ENCODE measurements at regions of chr7 and their contacts with region 1.

Region 1: GRCh38 chr7:98106647-98107445 is at the start of gene LMTK2:
- DNase-seq: peak; percentile 97
- ATAC-seq: peak; percentile 100
- H3K4me3 ChIP-seq: peak within 1 kb of the TSS; percentile 74 to 91 (median 84)
- H3K4me3 Mint-ChIP-seq: peak within 1 kb of the TSS; percentile 98
- H3K27ac ChIP-seq: peak within 1 kb of the TSS; percentile 47 to 77
- H3K27ac Mint-ChIP-seq: peak within 1 kb of the TSS; percentile 92
- H3K4me1 ChIP-seq: peaks cover 10 to 14% of the 10 kb centered on the region in 2 donors
- H3K4me1 Mint-ChIP-seq: peaks cover 24% of the 10 kb centered on the region
- H3K27me3 ChIP-seq: peaks cover 0 to 24% (median 14%) of the 10 kb centered on the region in 4 experiments
- H3K27me3 Mint-ChIP-seq: peaks cover 10% of the 10 kb centered on the region
- CTCF ChIP-seq: peak; percentile 91
- total RNA-seq, gene LMTK2: 13.1 and 16.7 TPM in 2 replicates

Region 2: DNA sequence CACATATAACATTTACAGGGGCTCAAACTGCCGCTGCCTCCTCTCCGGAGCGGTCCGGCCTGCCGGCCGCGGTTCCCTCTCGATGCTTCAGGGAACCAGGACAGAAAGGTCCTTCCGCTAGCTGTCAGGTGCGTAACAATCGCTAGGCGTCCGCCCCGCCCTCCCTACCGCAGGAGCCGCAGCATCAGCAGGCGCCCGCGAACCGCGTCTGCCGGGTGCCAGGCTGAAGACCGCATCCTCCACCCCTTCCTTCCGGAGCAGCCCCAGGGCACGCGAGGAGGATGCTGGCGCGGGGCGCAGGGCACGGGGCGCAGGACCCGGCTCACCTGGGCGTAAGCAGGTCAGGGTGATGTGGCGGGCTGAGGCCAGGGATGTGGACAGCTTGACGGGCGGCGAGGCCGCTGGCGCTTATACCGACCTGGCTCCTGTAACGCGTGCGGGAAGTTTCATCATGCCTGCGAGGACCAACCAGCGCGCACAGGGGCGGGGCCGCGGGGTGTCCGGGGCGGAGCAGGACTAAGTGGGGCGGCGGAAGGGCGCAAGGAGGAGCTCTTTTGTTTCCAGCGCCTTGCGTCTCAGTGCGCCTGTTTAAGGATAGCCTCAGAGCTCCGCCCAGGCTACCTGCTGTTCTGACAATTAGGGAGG is 234.7 kb before region 1 on chr7 and contains the start of gene ASNS:
- CTCF ChIA-PET with region 1: no interaction called
- POLR2A ChIA-PET with region 1: no interaction called
- intact Hi-C with region 1: loop called (anchors 1 kb)
- DNase-seq: peak; percentile 92
- ATAC-seq: peak; percentile 95
- H3K4me3 ChIP-seq: peak within 1 kb of the TSS; percentile 47 to 75 (median 70)
- H3K4me3 Mint-ChIP-seq: peak within 1 kb of the TSS; percentile 91
- H3K27ac ChIP-seq: peak within 1 kb of the TSS; percentile 68 to 85
- H3K27ac Mint-ChIP-seq: peak within 1 kb of the TSS; percentile 87
- H3K4me1 ChIP-seq: peaks cover 6 to 12% of the 10 kb centered on the region in 2 donors
- H3K4me1 Mint-ChIP-seq: peaks cover 14% of the 10 kb centered on the region
- H3K27me3 ChIP-seq: no peaks in the 10 kb centered on the region
- H3K27me3 Mint-ChIP-seq: no peaks in the 10 kb centered on the region
- CTCF ChIP-seq: no peak
- total RNA-seq, gene ASNS: 24.2 and 39.6 TPM in 2 replicates

Region 3: DNA sequence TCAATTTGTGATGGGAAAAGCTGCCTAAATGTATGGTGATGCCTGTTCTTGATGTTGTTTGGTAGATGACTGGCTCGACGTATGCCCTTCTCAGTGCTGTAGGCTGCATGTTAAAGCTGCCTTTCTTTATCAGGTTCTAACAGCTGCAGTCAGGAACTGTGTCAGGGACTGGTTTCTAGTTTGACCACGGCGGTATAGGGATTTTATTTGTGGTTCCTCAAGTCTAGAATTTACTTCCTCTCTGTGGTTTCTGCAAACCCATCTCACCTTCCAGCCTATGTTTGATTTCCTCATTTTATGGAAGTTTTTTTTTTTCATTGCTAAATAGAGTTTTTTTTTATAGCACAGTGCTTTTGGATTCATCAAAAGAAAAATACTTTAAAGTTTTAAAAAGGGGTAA is 26.3 kb after region 1 on chr7:
- CTCF ChIA-PET with region 1: interaction called, 10 read pairs
- POLR2A ChIA-PET with region 1: no interaction called
- intact Hi-C with region 1: loop called (anchors 2 kb)
- DNase-seq: peak; percentile 85
- ATAC-seq: peak; percentile 80
- H3K4me3 ChIP-seq: peak overlapping the region in 1 of 5 experiments; percentile 5
- H3K4me3 Mint-ChIP-seq: peak overlapping the region; percentile 75
- H3K27ac ChIP-seq: no peak overlapping the region
- H3K27ac Mint-ChIP-seq: no peak overlapping the region
- H3K4me1 ChIP-seq: peaks cover 69 to 81% of the 10 kb centered on the region in 2 donors
- H3K4me1 Mint-ChIP-seq: peaks cover 63% of the 10 kb centered on the region
- H3K27me3 ChIP-seq: peaks cover 0 to 74% (median 52%) of the 10 kb centered on the region in 4 experiments
- H3K27me3 Mint-ChIP-seq: peaks cover 57% of the 10 kb centered on the region
- CTCF ChIP-seq: no peak

Region 4: DNA sequence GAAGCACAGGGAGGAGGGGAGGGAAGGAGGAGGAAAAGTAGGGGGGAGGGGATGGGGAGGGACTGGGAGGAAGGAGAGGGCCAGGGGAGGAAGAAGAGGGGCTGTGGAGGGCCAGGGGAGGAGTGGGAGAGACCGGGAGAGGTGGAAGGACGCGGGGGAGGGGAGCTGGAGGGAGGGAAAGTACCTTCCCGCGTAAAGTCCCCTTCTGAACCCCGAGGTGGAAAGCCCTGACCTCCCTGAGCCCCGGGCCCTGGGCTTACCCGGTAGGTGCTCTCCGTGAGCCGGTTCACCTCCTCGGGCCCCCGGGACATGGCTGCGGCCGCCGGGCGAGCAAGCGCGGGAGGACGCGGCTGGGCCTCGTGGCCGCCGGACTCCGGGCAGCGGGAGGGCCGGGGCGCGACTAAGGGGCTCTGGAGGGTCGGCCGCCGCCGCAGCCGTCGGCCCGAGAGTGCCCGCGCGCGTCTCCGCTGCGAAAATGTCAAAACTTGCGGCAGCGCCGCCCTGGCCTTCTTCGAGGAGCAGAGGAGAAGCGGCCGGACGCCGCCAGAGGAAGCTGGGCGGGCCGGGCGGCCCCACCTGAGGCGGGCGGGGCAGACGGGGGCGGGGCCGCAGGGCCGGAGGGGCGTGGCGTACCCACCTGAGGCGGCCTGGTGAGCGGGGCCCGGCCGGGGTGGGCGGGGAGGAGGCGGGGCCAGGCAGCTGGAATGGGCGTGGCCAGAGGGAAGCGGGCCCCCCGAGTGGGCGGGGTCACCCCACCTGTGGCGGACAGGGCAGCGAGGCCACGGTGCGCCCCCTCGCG is 293.9 kb after region 1 on chr7 and contains the start of gene BAIAP2L1:
- CTCF ChIA-PET with region 1: no interaction called
- POLR2A ChIA-PET with region 1: no interaction called
- intact Hi-C with region 1: loop called (anchors 2 kb)
- DNase-seq: peak; percentile 87
- ATAC-seq: peak; percentile 95
- H3K4me3 ChIP-seq: peak within 1 kb of the TSS in 3 of 5 experiments; percentile 42 to 53 (median 53)
- H3K4me3 Mint-ChIP-seq: peak within 1 kb of the TSS; percentile 73
- H3K27ac ChIP-seq: no peak within 1 kb of the TSS
- H3K27ac Mint-ChIP-seq: peak within 1 kb of the TSS; percentile 15
- H3K4me1 ChIP-seq: peaks cover 7 to 14% of the 10 kb centered on the region in 2 donors
- H3K4me1 Mint-ChIP-seq: peaks cover 20% of the 10 kb centered on the region
- H3K27me3 ChIP-seq: peaks cover 0 to 23% (median 12%) of the 10 kb centered on the region in 4 experiments
- H3K27me3 Mint-ChIP-seq: peaks cover 32% of the 10 kb centered on the region
- CTCF ChIP-seq: no peak
- total RNA-seq, gene BAIAP2L1: 2.7 and 3.7 TPM in 2 replicates